CD8-positive, alpha-beta memory T cell (primary cell): ENCODE measurements at regions of chr17 and their contacts with region 1.

Region 1: DNA sequence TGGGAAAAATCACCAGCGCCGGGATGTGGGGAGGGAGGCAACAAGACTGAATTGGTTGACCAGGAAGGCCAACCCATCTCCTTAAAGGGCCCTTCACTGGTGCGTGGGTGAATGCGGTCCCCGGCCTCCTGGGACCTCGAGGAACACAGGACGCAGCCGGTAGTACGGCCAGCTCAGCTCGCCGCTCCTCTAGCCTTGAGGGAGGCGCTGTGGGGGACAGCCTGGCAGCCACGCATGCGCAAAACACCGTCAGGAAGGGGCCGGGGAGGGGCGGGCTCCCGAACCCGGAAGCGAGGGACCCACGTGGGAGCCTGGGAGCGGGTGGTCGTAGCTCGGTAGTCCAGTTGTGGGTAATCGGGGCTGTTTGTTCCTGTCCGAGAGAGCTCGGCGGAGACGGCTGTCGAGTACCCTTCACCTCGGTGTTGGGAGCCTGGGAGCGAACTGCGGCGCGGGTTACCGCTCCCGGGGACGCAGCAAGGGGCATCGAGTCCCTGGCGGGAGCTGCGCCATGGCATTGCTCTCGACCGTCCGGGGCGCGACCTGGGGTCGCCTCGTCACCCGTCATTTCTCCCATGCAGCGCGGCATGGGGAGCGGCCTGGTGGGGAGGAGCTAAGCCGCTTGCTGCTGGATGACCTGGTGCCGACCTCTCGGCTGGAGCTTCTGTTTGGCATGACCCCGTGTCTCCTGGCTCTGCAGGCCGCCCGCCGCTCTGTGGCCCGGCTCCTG is at the start of gene MRM1:
- DNase-seq: peak; percentile 82 to 94 (median 89)
- H3K4me3 ChIP-seq: peak within 1 kb of the TSS; percentile 97
- H3K4me3 Mint-ChIP-seq: peak within 1 kb of the TSS; percentile 88 to 94 (median 92)
- H3K27ac ChIP-seq: peak within 1 kb of the TSS; percentile 76
- H3K27ac Mint-ChIP-seq: peak within 1 kb of the TSS; percentile 89 to 96 (median 94)
- H3K4me1 ChIP-seq: peaks cover 28% of the 10 kb centered on the region
- H3K4me1 Mint-ChIP-seq: peaks cover 37 to 49% (median 45%) of the 10 kb centered on the region in 3 donors
- H3K27me3 ChIP-seq: no peaks in the 10 kb centered on the region
- H3K27me3 Mint-ChIP-seq: peaks cover 0 to 2% of the 10 kb centered on the region in 2 donors
- total RNA-seq, gene MRM1: 24.7 to 24.9 TPM

Region 2: DNA sequence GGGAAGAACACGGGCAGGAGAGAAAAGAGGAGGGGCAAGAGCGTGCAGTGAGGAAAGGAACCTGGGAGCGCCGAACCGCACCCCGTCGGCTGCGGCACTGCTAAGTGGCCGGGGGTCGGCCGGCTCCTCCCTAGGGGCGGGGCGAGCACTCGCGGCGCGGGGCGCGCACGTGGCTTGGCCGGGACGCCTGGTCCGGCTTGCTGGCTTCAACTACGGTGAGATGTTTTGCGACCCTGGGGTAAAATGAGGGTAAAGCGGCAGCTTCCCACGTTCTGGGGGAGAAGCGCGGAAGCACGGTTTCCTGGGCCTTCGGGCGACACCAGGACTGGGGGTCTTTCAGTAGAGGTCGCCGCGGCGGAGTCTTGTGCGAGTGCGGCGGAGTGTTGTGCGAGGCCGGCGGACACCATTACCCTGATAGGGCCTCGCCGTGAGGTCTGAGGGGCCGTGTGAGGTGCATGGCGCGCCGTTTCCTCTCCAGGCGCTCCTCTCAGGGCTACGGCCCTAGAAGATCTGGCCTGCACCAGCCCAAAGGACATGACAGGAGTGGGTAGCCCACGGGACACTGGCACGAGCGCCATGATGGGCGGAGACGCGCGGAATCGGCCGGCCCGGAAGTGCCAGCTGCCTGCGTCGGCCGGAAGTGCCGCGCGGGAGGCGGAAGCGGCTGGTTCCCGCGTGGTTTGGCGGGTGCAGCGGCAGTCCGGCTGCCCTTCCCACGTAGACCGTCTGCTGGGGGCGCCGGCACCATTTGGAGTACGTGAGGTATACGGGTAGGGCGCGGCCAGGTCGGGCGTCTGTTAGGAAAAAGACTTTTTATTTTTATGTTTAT is 66.4 kb before region 1 on chr17 and contains the starts of genes MYO19 and PIGW:
- CTCF ChIA-PET with region 1: interaction called, 14 read pairs
- POLR2A ChIA-PET with region 1: interaction called, 8 read pairs
- DNase-seq: peak; percentile 78 to 88 (median 84)
- H3K4me3 ChIP-seq: peak within 1 kb of the TSS; percentile 87
- H3K4me3 Mint-ChIP-seq: peak within 1 kb of the TSS; percentile 92 to 99 (median 97)
- H3K27ac ChIP-seq: peak within 1 kb of the TSS; percentile 95
- H3K27ac Mint-ChIP-seq: peak within 1 kb of the TSS; percentile 94 to 99 (median 98)
- H3K4me1 ChIP-seq: peaks cover 16% of the 10 kb centered on the region
- H3K4me1 Mint-ChIP-seq: peaks cover 17 to 37% (median 21%) of the 10 kb centered on the region in 3 donors
- H3K27me3 ChIP-seq: no peaks in the 10 kb centered on the region
- H3K27me3 Mint-ChIP-seq: no peaks in the 10 kb centered on the region
- total RNA-seq, gene MYO19: 133 to 138 TPM
- total RNA-seq, gene PIGW: 42.2 to 43.0 TPM

Region 3: GRCh38 chr17:36545465-36546417 is 55.7 kb before region 1 on chr17:
- CTCF ChIA-PET with region 1: interaction called, 11 read pairs
- POLR2A ChIA-PET with region 1: interaction called, 8 read pairs
- DNase-seq: peak; percentile 96 to 99 (median 97)
- H3K4me3 ChIP-seq: peak overlapping the region; percentile 93
- H3K4me3 Mint-ChIP-seq: peak overlapping the region; percentile 89 to 97 (median 92)
- H3K27ac ChIP-seq: peak overlapping the region; percentile 78
- H3K27ac Mint-ChIP-seq: peak overlapping the region; percentile 89 to 99 (median 96)
- H3K4me1 ChIP-seq: peaks cover 45% of the 10 kb centered on the region
- H3K4me1 Mint-ChIP-seq: peaks cover 39 to 58% (median 53%) of the 10 kb centered on the region in 3 donors
- H3K27me3 ChIP-seq: no peaks in the 10 kb centered on the region
- H3K27me3 Mint-ChIP-seq: peaks cover 0 to 4% of the 10 kb centered on the region in 2 donors

Region 4: DNA sequence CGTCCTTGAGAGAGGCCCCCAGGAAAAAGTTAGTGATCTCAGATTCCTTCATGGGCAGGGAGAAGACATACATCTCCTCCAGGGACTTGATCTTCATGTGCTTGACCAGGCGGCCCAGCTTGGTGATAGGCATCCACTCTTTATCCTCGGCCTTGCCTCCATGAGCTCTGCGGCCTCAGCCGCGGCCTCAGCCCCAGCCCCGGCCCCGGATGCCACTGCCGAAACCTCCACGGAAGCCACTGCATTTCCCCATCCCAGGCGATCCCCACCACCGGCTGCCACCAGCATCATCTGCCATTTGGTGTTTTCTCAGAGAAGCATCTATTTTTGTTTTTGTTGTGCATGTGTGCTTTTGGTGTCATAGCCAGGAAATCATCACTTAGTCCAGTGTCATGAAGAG is 26.4 kb before region 1 on chr17:
- CTCF ChIA-PET with region 1: no interaction called
- POLR2A ChIA-PET with region 1: no interaction called
- DNase-seq: no peak
- H3K4me3 ChIP-seq: no peak overlapping the region
- H3K4me3 Mint-ChIP-seq: peak overlapping the region in 1 of 7 donors; percentile 36
- H3K27ac ChIP-seq: no peak overlapping the region
- H3K27ac Mint-ChIP-seq: peak overlapping the region in 1 of 8 donors; percentile 15
- H3K4me1 ChIP-seq: no peaks in the 10 kb centered on the region
- H3K4me1 Mint-ChIP-seq: peaks cover 21 to 31% (median 28%) of the 10 kb centered on the region in 3 donors
- H3K27me3 ChIP-seq: no peaks in the 10 kb centered on the region
- H3K27me3 Mint-ChIP-seq: no peaks in the 10 kb centered on the region

Region 5: DNA sequence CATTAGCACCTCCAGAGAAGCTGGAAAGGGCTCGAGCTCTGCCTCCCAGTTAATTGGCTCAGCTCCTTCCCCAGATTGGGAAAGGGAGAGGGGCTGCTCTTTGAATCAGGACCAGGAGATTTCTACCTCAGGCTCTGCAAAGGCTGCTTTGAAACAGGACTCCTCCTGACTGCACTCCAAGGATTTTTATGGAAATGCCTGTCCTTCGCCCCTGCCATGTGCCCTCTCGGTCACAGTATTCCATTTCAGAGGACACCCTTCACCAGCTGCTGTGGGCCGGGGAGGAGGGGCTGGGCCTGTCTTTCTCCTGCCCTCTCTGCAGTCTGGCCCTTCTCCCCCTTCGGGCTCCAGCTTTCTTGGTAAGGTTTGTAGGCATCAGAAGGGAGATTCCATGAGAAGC is 13.5 kb after region 1 on chr17:
- CTCF ChIA-PET with region 1: interaction called, 12 read pairs
- POLR2A ChIA-PET with region 1: no interaction called
- DNase-seq: no peak
- H3K4me3 ChIP-seq: no peak overlapping the region
- H3K4me3 Mint-ChIP-seq: no peak overlapping the region
- H3K27ac ChIP-seq: no peak overlapping the region
- H3K27ac Mint-ChIP-seq: no peak overlapping the region
- H3K4me1 ChIP-seq: no peaks in the 10 kb centered on the region
- H3K4me1 Mint-ChIP-seq: no peaks in the 10 kb centered on the region
- H3K27me3 ChIP-seq: no peaks in the 10 kb centered on the region
- H3K27me3 Mint-ChIP-seq: peaks cover 0 to 1% of the 10 kb centered on the region in 2 donors

Region 6: DNA sequence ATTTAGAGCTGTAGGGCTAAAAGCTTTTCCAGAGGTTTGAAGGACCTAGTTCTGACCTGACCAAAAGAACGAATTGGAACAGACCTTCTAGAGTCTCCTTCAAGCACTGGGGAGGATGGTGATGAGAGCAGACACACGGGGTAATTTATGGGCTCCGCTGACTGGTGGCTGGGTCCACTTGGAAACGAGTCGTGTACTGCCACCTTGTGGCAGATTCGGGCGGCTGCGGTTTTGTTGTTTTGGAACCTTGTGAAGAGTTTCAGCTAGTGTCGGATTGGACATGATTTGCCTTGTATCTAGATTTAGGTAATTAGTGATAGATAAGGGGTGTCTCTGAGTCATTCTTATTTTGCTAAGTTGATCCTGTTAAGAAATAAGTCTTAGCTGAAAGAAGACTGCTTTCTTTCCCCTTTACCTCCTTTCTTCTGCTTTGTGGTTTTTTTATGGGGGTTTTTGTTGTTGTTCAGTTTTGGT is 446.2 kb after region 1 on chr17:
- CTCF ChIA-PET with region 1: interaction called, 24 read pairs
- POLR2A ChIA-PET with region 1: no interaction called
- DNase-seq: peak; percentile 55 to 84 (median 61)
- H3K4me3 ChIP-seq: no peak overlapping the region
- H3K4me3 Mint-ChIP-seq: no peak overlapping the region
- H3K27ac ChIP-seq: no peak overlapping the region
- H3K27ac Mint-ChIP-seq: peak overlapping the region in 7 of 8 donors; percentile 42 to 81 (median 55)
- H3K4me1 ChIP-seq: peaks cover 6% of the 10 kb centered on the region
- H3K4me1 Mint-ChIP-seq: peaks cover 9 to 15% (median 14%) of the 10 kb centered on the region in 3 donors
- H3K27me3 ChIP-seq: no peaks in the 10 kb centered on the region
- H3K27me3 Mint-ChIP-seq: no peaks in the 10 kb centered on the region

Region 7: DNA sequence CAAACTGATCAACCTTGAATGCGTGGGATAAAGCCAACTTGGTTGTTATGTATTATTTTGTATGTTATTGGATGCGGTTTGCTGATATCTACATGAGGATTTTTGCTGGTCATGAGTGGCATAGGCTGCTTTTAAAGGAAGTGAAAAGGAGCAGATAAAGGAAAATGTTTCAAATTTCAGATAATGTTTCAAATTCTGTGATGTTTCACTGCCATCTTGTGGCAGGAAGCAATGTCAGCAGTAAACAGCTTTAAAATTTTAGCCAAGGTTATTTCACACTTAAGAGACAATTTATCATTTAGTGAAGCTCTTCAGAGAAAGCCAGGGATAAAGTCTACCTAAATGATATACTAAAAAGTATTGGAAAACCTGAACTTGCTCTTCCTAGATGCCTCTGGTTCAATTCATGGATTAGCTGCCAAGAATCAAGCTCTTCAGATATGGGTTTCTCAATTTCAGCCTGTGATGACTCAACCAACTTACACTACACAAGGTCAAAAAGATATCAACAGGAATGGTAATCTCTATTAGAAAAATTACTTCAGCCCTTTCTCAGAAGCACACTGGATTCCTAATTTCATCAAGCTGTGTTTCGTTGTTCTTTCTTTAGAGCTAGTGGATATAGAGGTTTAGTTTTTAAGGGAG is 638.3 kb after region 1 on chr17:
- CTCF ChIA-PET with region 1: interaction called, 19 read pairs
- POLR2A ChIA-PET with region 1: no interaction called
- DNase-seq: no peak
- H3K4me3 ChIP-seq: no peak overlapping the region
- H3K4me3 Mint-ChIP-seq: no peak overlapping the region
- H3K27ac ChIP-seq: no peak overlapping the region
- H3K27ac Mint-ChIP-seq: peak overlapping the region in 1 of 8 donors; percentile 22
- H3K4me1 ChIP-seq: no peaks in the 10 kb centered on the region
- H3K4me1 Mint-ChIP-seq: no peaks in the 10 kb centered on the region
- H3K27me3 ChIP-seq: no peaks in the 10 kb centered on the region
- H3K27me3 Mint-ChIP-seq: no peaks in the 10 kb centered on the region